Calu3 (cell line): ENCODE measurements at regions of chr2 and their contacts with region 1.

Region 1: GRCh38 chr2:38274286-38275276 is 102.5 kb downstream of the ATL2 start:
- DNase-seq: peak; percentile 48
- H3K4me3 Mint-ChIP-seq: no peak overlapping the region
- H3K27ac Mint-ChIP-seq: peak overlapping the region; percentile 71
- H3K4me1 Mint-ChIP-seq: peaks cover 26% of the 10 kb centered on the region
- H3K27me3 Mint-ChIP-seq: no peaks in the 10 kb centered on the region
- CTCF ChIP-seq: peak; percentile 49

Region 2: DNA sequence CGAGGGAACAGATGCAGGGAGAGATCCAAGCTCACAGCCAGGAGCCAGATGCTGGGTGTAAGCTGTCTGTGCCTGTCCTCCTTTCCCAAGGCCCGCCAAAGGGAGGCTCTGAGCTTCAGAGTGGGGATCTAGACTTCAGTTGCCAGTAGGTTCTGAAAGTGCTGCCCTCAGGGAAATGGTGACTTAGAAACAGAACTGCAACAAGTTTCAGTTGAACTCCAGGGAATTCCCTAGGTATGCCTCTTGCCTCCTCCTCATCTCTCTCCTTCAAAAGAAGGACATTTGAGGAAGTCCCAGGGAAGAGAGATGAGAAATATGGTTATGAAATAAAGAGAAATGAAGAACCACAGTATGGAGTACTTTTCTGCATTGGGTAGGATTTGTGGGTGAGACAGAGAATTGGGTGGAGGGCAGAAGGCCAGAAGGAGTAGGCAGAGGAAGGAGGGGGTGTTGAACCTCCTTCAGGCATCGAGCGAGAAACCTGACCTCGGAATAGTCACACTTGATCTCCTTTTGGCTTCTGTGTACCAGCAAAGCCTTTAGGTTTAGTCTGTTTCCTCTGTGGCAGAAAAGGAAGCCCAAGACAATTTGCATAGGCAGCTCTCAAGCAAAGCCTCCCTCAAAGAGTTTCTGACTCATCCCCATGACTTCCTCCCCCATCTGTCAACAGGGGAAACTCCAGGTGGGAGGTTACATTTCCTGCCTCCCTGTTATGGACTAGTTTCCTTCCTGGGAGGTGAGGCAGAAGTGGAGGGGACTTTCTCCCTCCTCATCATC is 884.4 kb before region 1 on chr2:
- CTCF ChIA-PET with region 1: no interaction called
- intact Hi-C with region 1: loop called (anchors 10 kb)
- DNase-seq: peak; percentile 76
- H3K4me3 Mint-ChIP-seq: peak overlapping the region; percentile 12
- H3K27ac Mint-ChIP-seq: peak overlapping the region; percentile 63
- H3K4me1 Mint-ChIP-seq: no peaks in the 10 kb centered on the region
- H3K27me3 Mint-ChIP-seq: no peaks in the 10 kb centered on the region
- CTCF ChIP-seq: no peak

Region 3: GRCh38 chr2:37982147-37982582 is 292.4 kb before region 1 on chr2:
- CTCF ChIA-PET with region 1: interaction called, 13 read pairs
- intact Hi-C with region 1: loop called (anchors 1 kb)
- DNase-seq: peak; percentile 77
- H3K4me3 Mint-ChIP-seq: no peak overlapping the region
- H3K27ac Mint-ChIP-seq: no peak overlapping the region
- H3K4me1 Mint-ChIP-seq: peaks cover 8% of the 10 kb centered on the region
- H3K27me3 Mint-ChIP-seq: no peaks in the 10 kb centered on the region
- CTCF ChIP-seq: peak; percentile 80

Region 4: GRCh38 chr2:38076606-38077430 is 197.8 kb before region 1 on chr2:
- CTCF ChIA-PET with region 1: interaction called, 73 read pairs
- intact Hi-C with region 1: loop called (anchors 1 kb)
- DNase-seq: peak; percentile 93
- H3K4me3 Mint-ChIP-seq: peak overlapping the region; percentile 88
- H3K27ac Mint-ChIP-seq: peak overlapping the region; percentile 95
- H3K4me1 Mint-ChIP-seq: peaks cover 37% of the 10 kb centered on the region
- H3K27me3 Mint-ChIP-seq: no peaks in the 10 kb centered on the region
- CTCF ChIP-seq: peak; percentile 62

Region 5: GRCh38 chr2:38115216-38116032 is 159.2 kb before region 1 on chr2:
- CTCF ChIA-PET with region 1: interaction called, 5 read pairs
- intact Hi-C with region 1: loop called (anchors 2 kb)
- DNase-seq: peak; percentile 89
- H3K4me3 Mint-ChIP-seq: no peak overlapping the region
- H3K27ac Mint-ChIP-seq: no peak overlapping the region
- H3K4me1 Mint-ChIP-seq: peaks cover 66% of the 10 kb centered on the region
- H3K27me3 Mint-ChIP-seq: no peaks in the 10 kb centered on the region
- CTCF ChIP-seq: peak; percentile 88

Region 6: GRCh38 chr2:38146275-38146906 is 128.2 kb before region 1 on chr2:
- CTCF ChIA-PET with region 1: interaction called, 15 read pairs
- intact Hi-C with region 1: no loop called
- DNase-seq: peak; percentile 49
- H3K4me3 Mint-ChIP-seq: peak overlapping the region; percentile 19
- H3K27ac Mint-ChIP-seq: peak overlapping the region; percentile 80
- H3K4me1 Mint-ChIP-seq: peaks cover 27% of the 10 kb centered on the region
- H3K27me3 Mint-ChIP-seq: no peaks in the 10 kb centered on the region
- CTCF ChIP-seq: no peak

Region 7: GRCh38 chr2:38260469-38260868 is 14.1 kb before region 1 on chr2:
- CTCF ChIA-PET with region 1: no interaction called
- intact Hi-C with region 1: no loop called
- DNase-seq: no peak
- H3K4me3 Mint-ChIP-seq: no peak overlapping the region
- H3K27ac Mint-ChIP-seq: no peak overlapping the region
- H3K4me1 Mint-ChIP-seq: no peaks in the 10 kb centered on the region
- H3K27me3 Mint-ChIP-seq: no peaks in the 10 kb centered on the region
- CTCF ChIP-seq: no peak

Region 8: DNA sequence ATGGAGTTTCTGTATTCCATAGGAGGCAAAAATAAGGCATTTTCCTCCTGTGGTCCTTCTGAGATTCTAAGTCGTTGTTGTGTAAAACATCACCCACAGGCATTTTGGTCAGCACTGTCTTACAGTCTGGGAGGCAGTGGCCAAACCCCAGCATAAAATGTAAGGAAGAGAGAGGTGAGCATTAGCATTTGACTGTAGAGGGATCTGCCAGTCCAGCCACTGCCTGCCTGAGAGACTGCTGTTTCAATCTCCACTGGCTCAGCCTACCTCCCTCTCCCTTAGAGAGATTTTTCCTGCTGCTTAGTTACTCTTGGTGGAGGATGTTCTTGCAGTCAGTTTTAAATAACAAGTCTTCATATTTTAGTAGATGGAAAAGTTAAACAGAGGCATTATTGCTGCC is 692.1 kb after region 1 on chr2:
- CTCF ChIA-PET with region 1: no interaction called
- intact Hi-C with region 1: no loop called
- DNase-seq: no peak
- H3K4me3 Mint-ChIP-seq: no peak overlapping the region
- H3K27ac Mint-ChIP-seq: no peak overlapping the region
- H3K4me1 Mint-ChIP-seq: no peaks in the 10 kb centered on the region
- H3K27me3 Mint-ChIP-seq: peaks cover under 1% of the 10 kb centered on the region
- CTCF ChIP-seq: no peak